ENCODE measurements at regions of chr12 and their contacts with region 1.

Region 1: GRCh38 chr12:108664338-108665258 is 30.9 kb upstream of the SELPLG start:
- DNase-seq: peak; percentile 82 to 94
- ATAC-seq: peak; percentile 91 to 93
- H3K4me3 ChIP-seq: no peak overlapping the region
- H3K27ac ChIP-seq: peak overlapping the region; percentile 50 to 78
- H3K4me1 ChIP-seq: peaks cover 59% of the 10 kb centered on the region
- CTCF ChIP-seq: peak; percentile 94
- EP300 ChIP-seq: no peak
- POLR2A ChIP-seq: no peak
- RAD21 ChIP-seq: peak; percentile 98 to 99

Region 2: GRCh38 chr12:108214486-108214885 is 450.1 kb before region 1 on chr12:
- CTCF ChIA-PET with region 1: no interaction called
- POLR2A ChIA-PET with region 1: no interaction called
- DNase-seq: peak in 1 of 2 experiments; percentile 22
- ATAC-seq: no peak
- H3K4me3 ChIP-seq: no peak overlapping the region
- H3K27ac ChIP-seq: no peak overlapping the region
- H3K4me1 ChIP-seq: no peaks in the 10 kb centered on the region
- CTCF ChIP-seq: no peak
- EP300 ChIP-seq: no peak
- POLR2A ChIP-seq: no peak
- RAD21 ChIP-seq: no peak

Region 3: GRCh38 chr12:108640802-108641445 is 23.7 kb before region 1 on chr12:
- CTCF ChIA-PET with region 1: interaction called, 16 read pairs
- POLR2A ChIA-PET with region 1: no interaction called
- DNase-seq: no peak
- ATAC-seq: peak in 1 of 2 experiments; percentile 5; a peak in 3 of 6 replicates
- H3K4me3 ChIP-seq: no peak overlapping the region
- H3K27ac ChIP-seq: peak overlapping the region in 1 of 2 experiments; percentile 45; a peak in 1 of 6 replicates
- H3K4me1 ChIP-seq: peaks cover 21% of the 10 kb centered on the region
- CTCF ChIP-seq: no peak
- EP300 ChIP-seq: no peak
- POLR2A ChIP-seq: no peak
- RAD21 ChIP-seq: no peak

Region 4: DNA sequence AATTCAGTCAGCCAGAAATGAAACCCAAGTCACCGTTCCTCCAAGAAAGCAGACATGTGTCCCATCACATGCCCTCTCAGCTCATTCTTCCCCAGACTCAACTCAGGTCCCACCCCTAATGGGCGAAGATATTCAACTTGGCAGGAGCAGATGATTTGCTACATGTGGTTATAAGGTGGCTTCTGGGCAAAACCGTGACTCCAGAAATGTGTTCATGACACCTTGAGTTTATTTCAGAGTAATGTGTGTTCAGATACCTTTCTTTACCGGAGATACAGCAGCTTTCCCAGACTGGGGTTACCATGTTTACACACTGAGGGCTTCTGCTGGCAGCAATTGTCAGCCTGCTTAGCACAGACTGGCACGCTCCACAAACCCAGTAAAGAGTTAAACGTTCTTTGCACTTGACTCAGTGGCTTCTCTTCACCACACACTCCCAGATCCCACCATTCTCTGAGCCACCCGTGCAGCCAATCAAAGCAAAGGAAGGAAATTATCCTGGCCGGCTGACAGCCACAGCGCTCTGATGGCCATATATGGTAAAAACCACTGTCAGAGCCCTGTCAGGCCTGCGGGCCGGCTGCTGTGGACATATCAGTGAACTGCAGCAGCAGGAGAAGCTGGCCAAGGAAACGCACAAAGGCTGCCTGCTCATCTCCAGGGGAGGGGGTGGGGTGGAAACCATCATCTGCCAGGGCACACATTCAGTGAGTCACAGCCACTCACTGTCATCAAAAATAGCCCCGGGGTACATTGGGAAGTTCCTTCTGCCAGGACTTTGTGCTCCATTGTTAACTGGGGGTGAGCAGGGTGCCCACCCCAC is 26.8 kb after region 1 on chr12:
- CTCF ChIA-PET with region 1: interaction called, 127 read pairs
- POLR2A ChIA-PET with region 1: interaction called, 5 read pairs
- DNase-seq: peak; percentile 93 to 99
- ATAC-seq: peak; percentile 95 to 97
- H3K4me3 ChIP-seq: peak overlapping the region; percentile 37
- H3K27ac ChIP-seq: peak overlapping the region; percentile 91
- H3K4me1 ChIP-seq: peaks cover 71% of the 10 kb centered on the region
- CTCF ChIP-seq: no peak
- EP300 ChIP-seq: peak; percentile 40; a peak in 1 of 5 replicates
- POLR2A ChIP-seq: peak; percentile 13; the same call in 1 of the 2 replicates
- RAD21 ChIP-seq: peak in 1 of 2 experiments; percentile 23; a peak in 1 of 5 replicates

Region 5: GRCh38 chr12:108731105-108731865 is 66.7 kb after region 1 on chr12 and contains the start of gene CORO1C:
- CTCF ChIA-PET with region 1: interaction called, 35 read pairs
- POLR2A ChIA-PET with region 1: interaction called, 4 read pairs
- DNase-seq: peak; percentile 89 to 98
- ATAC-seq: peak; percentile 67 to 74
- H3K4me3 ChIP-seq: peak within 1 kb of the TSS; percentile 92
- H3K27ac ChIP-seq: peak within 1 kb of the TSS; percentile 87 to 98
- H3K4me1 ChIP-seq: peaks cover 62% of the 10 kb centered on the region
- CTCF ChIP-seq: peak; percentile 69
- EP300 ChIP-seq: no peak
- POLR2A ChIP-seq: peak; percentile 74
- RAD21 ChIP-seq: peak; percentile 42 to 57; a peak in 4 of 5 replicates
- polyA plus RNA-seq, gene CORO1C: 245 and 296 TPM in 2 replicates

Region 6: GRCh38 chr12:108784270-108784669 is 119.7 kb after region 1 on chr12:
- CTCF ChIA-PET with region 1: interaction called, 73 read pairs
- POLR2A ChIA-PET with region 1: no interaction called
- DNase-seq: no peak
- ATAC-seq: peak; percentile 5 to 14; a peak in 2 of 6 replicates
- H3K4me3 ChIP-seq: no peak overlapping the region
- H3K27ac ChIP-seq: no peak overlapping the region
- H3K4me1 ChIP-seq: no peaks in the 10 kb centered on the region
- CTCF ChIP-seq: no peak
- EP300 ChIP-seq: no peak
- POLR2A ChIP-seq: no peak
- RAD21 ChIP-seq: no peak

Region 7: DNA sequence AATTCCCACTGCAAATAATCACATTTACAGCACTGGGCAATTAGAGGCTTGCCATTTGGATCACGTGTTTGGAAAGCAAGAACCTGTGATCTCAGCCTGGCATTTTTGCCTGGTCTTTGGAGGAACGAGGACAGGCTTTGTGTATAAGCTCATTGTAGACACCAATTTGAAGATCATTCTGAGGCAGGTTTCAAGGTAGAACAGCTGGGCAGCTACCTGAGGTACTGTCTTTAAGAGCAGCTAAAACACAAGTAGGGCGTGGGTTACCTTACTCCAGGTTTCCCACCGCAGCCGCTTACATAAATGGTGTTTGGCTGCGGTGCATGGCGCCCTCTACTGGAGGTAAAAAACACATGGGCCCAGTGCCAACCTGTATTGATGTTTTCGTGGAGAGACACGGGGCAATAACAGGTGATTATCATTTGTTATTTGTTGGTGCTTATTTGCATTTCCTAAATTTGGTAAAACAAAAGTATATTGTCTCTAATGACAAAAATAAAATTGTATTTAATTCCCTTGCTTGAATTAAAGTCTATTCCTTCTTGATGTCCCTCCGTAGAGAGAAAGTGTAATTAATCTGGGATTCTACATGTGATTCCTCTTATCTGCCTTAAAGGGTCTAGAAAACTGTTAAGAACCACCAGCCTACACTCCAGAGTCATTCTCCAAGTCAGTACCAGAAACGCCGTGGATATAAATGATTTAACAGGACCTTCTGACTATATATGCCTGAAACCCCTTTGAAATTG is 286.6 kb after region 1 on chr12:
- CTCF ChIA-PET with region 1: interaction called, 15 read pairs
- POLR2A ChIA-PET with region 1: no interaction called
- DNase-seq: peak; percentile 39 to 75
- ATAC-seq: peak; percentile 49 to 87; a peak in 3 of 6 replicates
- H3K4me3 ChIP-seq: no peak overlapping the region
- H3K27ac ChIP-seq: 0 out of 6 replicates have a peak overlapping the region, but pooled peaks of 1 of the 2 experiments have one; percentile 36
- H3K4me1 ChIP-seq: no peaks in the 10 kb centered on the region
- CTCF ChIP-seq: peak; percentile 92
- EP300 ChIP-seq: no peak
- POLR2A ChIP-seq: no peak
- RAD21 ChIP-seq: peak; percentile 86 to 89

Measured in A549 (cell line).